CD4-positive, alpha-beta T cell (primary cell): ENCODE measurements at regions of chr3 and their contacts with region 1.

Region 1: DNA sequence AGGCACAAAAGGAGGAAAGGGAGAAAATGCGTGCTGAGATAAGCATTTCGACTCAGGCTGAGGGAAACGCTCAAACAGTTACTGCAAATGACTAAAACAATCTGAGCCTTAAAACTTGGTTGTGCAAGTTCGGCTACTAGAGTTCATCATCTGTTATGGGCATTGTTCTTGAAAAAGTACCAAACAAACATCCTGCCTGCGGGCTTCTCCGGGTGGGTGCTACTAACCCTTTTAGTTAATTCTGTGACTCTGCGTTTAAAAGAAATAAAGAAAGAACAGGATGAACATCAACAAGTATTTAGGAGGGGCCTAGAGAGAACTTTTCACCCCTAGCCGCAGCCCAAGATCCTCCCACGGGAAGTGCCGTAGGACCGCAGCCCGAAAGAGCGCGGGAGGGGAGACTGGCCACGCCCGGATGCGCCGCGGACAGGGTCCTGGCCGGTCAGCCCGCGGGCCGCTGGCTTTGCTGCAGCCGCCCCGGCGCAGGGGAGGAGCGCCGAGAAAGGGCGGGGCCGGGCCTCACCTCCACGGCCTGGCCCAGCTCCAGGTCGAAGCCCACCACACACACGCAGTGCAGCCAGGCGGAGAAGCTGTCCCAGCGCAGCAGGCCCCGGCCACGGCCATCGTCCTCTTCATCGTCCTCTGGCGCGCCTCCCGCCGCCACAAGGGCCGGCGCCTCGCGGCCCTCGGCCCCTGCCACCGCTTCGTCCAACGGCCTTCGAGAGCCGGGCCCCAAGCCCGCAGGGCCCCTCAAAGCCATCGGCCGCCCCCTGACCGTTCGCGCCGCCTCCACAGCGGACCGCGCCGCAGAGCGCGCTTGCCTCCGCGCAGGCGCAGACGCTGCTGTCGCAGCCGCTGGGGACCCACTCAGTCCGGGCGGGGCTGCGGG is at the start of gene DENND6A:
- DNase-seq: peak; percentile 73 to 98 (median 94)
- ATAC-seq: peak; percentile 73
- H3K4me3 ChIP-seq: peak within 1 kb of the TSS; percentile 53
- H3K4me3 Mint-ChIP-seq: peak within 1 kb of the TSS; percentile 93
- H3K27ac ChIP-seq: peak within 1 kb of the TSS; percentile 47 to 94
- H3K27ac Mint-ChIP-seq: peak within 1 kb of the TSS; percentile 94
- H3K4me1 ChIP-seq: peaks cover 31% of the 10 kb centered on the region
- H3K4me1 Mint-ChIP-seq: peaks cover 46% of the 10 kb centered on the region
- H3K27me3 ChIP-seq: no peaks in the 10 kb centered on the region
- H3K27me3 Mint-ChIP-seq: no peaks in the 10 kb centered on the region
- CTCF ChIP-seq: no peak
- total RNA-seq, gene DENND6A: 67.2 to 74.4 TPM

Region 2: DNA sequence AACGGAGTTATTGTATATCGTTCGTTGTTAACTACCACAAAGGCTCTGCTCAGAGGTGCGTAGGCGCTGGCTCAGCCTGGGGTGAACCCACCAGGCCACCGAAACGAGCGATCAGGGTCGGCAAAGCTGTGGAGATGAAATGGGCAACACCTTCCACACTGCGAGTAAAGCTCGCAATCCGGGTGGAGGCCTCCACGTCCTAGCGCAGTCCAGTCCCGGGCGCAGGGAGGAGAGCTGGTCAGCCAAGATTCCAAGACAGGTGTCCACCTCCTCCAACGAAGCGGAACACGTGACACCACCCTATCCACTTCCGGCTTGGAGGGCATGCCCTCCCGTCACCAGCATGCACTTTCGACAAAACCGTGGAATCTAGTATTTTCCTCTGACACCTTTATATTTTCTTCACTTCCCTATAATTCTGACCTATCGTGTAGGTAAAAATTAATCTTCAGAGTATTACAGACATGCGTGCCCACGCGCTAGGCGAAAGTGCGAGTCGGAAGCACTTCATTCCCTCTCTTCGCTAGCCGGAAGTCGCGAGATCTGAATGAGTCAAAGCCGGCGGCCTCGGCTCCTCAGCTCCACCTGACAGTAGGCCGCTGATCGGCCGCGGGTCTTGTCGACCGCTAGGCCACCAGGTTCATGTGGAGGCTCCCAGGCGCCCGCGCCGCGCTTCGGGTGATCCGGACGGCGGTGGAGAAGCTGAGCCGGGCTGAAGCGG is 136.6 kb before region 1 on chr3 and contains the start of gene PDE12:
- CTCF ChIA-PET with region 1: no interaction called
- POLR2A ChIA-PET with region 1: interaction called, 18 read pairs
- intact Hi-C with region 1: loop called (anchors 1 to 2 kb)
- DNase-seq: peak; percentile 66 to 92 (median 78)
- ATAC-seq: peak; percentile 67
- H3K4me3 ChIP-seq: peak within 1 kb of the TSS; percentile 88
- H3K4me3 Mint-ChIP-seq: peak within 1 kb of the TSS; percentile 94
- H3K27ac ChIP-seq: peak within 1 kb of the TSS; percentile 84 to 98
- H3K27ac Mint-ChIP-seq: peak within 1 kb of the TSS; percentile 93
- H3K4me1 ChIP-seq: peaks cover 34% of the 10 kb centered on the region
- H3K4me1 Mint-ChIP-seq: peaks cover 45% of the 10 kb centered on the region
- H3K27me3 ChIP-seq: no peaks in the 10 kb centered on the region
- H3K27me3 Mint-ChIP-seq: no peaks in the 10 kb centered on the region
- CTCF ChIP-seq: no peak
- total RNA-seq, gene PDE12: 40.5 to 40.9 TPM

Region 3: GRCh38 chr3:57659806-57660439 is 32.6 kb before region 1 on chr3:
- CTCF ChIA-PET with region 1: interaction called, 3 read pairs
- POLR2A ChIA-PET with region 1: no interaction called
- intact Hi-C with region 1: loop called in 1 of 2 experiments (anchors 5 kb)
- DNase-seq: no peak
- ATAC-seq: no peak
- H3K4me3 ChIP-seq: no peak overlapping the region
- H3K4me3 Mint-ChIP-seq: no peak overlapping the region
- H3K27ac ChIP-seq: no peak overlapping the region
- H3K27ac Mint-ChIP-seq: no peak overlapping the region
- H3K4me1 ChIP-seq: no peaks in the 10 kb centered on the region
- H3K4me1 Mint-ChIP-seq: no peaks in the 10 kb centered on the region
- H3K27me3 ChIP-seq: no peaks in the 10 kb centered on the region
- H3K27me3 Mint-ChIP-seq: no peaks in the 10 kb centered on the region
- CTCF ChIP-seq: no peak

Region 4: DNA sequence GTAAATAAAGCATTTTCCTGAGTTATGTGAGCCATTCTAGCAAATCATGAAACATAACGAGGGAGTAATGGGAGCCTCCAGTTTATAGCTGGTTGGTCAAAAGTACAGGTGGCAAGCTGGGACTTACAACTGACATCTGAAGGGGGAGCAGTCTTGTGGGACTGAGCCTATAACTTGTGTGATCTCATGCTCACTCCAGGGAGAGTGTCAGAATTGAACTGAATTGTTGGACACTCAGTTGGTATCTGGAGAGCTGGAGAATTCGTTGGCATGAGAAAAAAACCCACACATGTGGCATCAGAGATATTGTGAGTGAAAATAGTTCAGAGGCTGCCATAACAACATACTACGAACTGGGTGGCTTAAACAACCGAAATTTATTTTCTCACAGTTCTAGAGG is 23.2 kb after region 1 on chr3:
- CTCF ChIA-PET with region 1: no interaction called
- POLR2A ChIA-PET with region 1: no interaction called
- intact Hi-C with region 1: no loop called
- DNase-seq: no peak
- ATAC-seq: no peak
- H3K4me3 ChIP-seq: no peak overlapping the region
- H3K4me3 Mint-ChIP-seq: no peak overlapping the region
- H3K27ac ChIP-seq: no peak overlapping the region
- H3K27ac Mint-ChIP-seq: no peak overlapping the region
- H3K4me1 ChIP-seq: no peaks in the 10 kb centered on the region
- H3K4me1 Mint-ChIP-seq: no peaks in the 10 kb centered on the region
- H3K27me3 ChIP-seq: no peaks in the 10 kb centered on the region
- H3K27me3 Mint-ChIP-seq: no peaks in the 10 kb centered on the region
- CTCF ChIP-seq: no peak

Region 5: DNA sequence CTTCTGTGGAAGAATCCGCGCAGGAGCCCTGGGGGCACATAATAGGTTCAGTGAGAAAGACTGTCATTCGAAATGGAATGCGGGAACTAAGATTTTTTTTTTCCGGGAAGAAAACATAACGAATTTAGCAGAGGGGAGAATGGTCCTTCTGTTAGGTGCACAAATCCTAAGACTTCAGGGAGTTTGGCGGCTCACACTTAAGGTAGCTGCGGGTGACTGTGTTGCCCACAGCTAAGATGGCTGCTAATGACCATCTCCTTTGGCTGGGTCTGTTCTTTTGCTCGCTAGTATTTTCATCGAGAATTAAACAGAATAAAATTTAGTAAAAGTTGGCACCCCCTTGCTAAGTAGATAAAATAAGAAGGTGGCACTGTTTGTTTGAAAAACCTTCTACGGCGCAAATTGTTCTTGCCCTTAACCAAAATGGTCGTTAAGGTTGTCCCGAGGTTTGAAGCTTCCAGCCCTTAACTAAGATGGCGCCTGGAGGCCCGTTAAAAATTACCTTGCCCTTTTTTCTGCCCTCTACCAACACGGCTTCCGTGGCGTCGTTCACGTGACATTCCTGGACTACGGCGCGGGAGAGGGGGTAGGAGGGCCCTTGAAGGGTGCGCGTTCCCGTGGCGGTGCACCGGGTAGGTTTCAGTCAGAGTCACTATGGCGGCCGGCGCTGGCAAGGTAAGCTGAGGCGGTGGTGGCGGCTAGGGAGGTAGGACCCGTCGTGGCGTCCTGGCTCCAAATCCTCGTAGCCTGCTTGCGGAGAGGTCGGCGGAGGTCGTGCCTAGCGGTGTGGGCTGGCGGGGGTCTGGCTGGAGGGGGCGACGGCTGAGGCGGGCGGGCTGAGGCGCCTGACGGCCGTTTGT is 63.4 kb after region 1 on chr3 and contains the start of gene SLMAP:
- CTCF ChIA-PET with region 1: no interaction called
- POLR2A ChIA-PET with region 1: interaction called, 34 read pairs
- intact Hi-C with region 1: loop called (anchors 1 kb)
- DNase-seq: peak; percentile 91 to 98 (median 94)
- ATAC-seq: peak; percentile 92
- H3K4me3 ChIP-seq: peak within 1 kb of the TSS; percentile 72
- H3K4me3 Mint-ChIP-seq: peak within 1 kb of the TSS; percentile 97
- H3K27ac ChIP-seq: peak within 1 kb of the TSS; percentile 82 to 87
- H3K27ac Mint-ChIP-seq: peak within 1 kb of the TSS; percentile 97
- H3K4me1 ChIP-seq: peaks cover 33% of the 10 kb centered on the region
- H3K4me1 Mint-ChIP-seq: peaks cover 46% of the 10 kb centered on the region
- H3K27me3 ChIP-seq: no peaks in the 10 kb centered on the region
- H3K27me3 Mint-ChIP-seq: no peaks in the 10 kb centered on the region
- CTCF ChIP-seq: no peak
- total RNA-seq, gene SLMAP: 51.3 to 52.2 TPM

Region 6: GRCh38 chr3:58237238-58237940 is 544.9 kb after region 1 on chr3 and contains the start of gene ABHD6:
- CTCF ChIA-PET with region 1: interaction called, 3 read pairs
- POLR2A ChIA-PET with region 1: no interaction called
- intact Hi-C with region 1: loop called in 1 of 2 experiments (anchors 5 kb)
- DNase-seq: peak; percentile 64 to 89 (median 79)
- ATAC-seq: peak; percentile 88
- H3K4me3 ChIP-seq: peak within 1 kb of the TSS; percentile 95
- H3K4me3 Mint-ChIP-seq: peak within 1 kb of the TSS; percentile 96
- H3K27ac ChIP-seq: peak within 1 kb of the TSS; percentile 24 to 57
- H3K27ac Mint-ChIP-seq: peak within 1 kb of the TSS; percentile 61
- H3K4me1 ChIP-seq: peaks cover 19% of the 10 kb centered on the region
- H3K4me1 Mint-ChIP-seq: peaks cover 14% of the 10 kb centered on the region
- H3K27me3 ChIP-seq: peaks cover 0 to 3% of the 10 kb centered on the region in 2 experiments
- H3K27me3 Mint-ChIP-seq: peaks cover 18% of the 10 kb centered on the region
- CTCF ChIP-seq: peak; percentile 16
- total RNA-seq, gene ABHD6: 0.71 to 1.9 TPM